ENCODE measurements at regions of chr9 and their contacts with region 1.

Region 1: GRCh38 chr9:128254855-128255759 is 20.7 kb downstream of the GOLGA2 start:
- DNase-seq: peak; percentile 93
- H3K4me3 ChIP-seq: no peak overlapping the region
- H3K27ac ChIP-seq: peak overlapping the region in 1 of 2 experiments; percentile 40; a peak in 1 of 4 replicates
- H3K4me1 ChIP-seq: peaks cover 0 to 4% of the 10 kb centered on the region in 2 experiments; a peak in 1 of 4 replicates
- H3K27me3 ChIP-seq: no peaks in the 10 kb centered on the region
- CTCF ChIP-seq: peak; percentile 87
- EP300 ChIP-seq: no peak
- RAD21 ChIP-seq: peak; percentile 53

Region 2: DNA sequence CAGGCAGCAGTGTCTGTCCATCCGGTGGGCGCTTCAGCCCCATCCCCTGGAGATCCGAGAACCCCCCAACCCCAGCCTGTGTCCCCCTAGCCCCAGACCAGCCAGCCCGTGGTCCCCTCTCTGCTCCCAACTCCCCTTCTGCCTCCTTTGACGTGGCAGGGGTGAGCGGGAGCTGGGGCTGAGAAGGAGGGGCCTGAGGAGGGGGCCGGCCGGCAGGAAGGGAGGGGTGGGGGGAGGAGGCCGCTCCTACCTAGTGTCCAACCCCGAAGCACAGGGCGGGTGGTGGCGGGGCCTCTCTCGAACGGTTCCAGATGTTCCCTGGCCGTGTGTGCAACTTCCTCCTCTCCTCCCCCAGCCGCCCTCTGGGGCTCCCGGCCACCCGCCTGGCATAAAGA is 10.3 kb before region 1 on chr9:
- CTCF ChIA-PET with region 1: interaction called, 18 read pairs
- POLR2A ChIA-PET with region 1: interaction called, 7 read pairs
- DNase-seq: peak; percentile 96
- H3K4me3 ChIP-seq: peak overlapping the region in 1 of 2 experiments; percentile 39; a peak in 3 of 4 replicates
- H3K27ac ChIP-seq: peak overlapping the region; percentile 66 to 97; a peak in 3 of 4 replicates
- H3K4me1 ChIP-seq: peaks cover 21 to 39% of the 10 kb centered on the region in 2 experiments
- H3K27me3 ChIP-seq: no peaks in the 10 kb centered on the region
- CTCF ChIP-seq: no peak
- EP300 ChIP-seq: peak in 1 of 2 experiments; percentile 59; a peak in 2 of 4 replicates
- RAD21 ChIP-seq: no peak